ENCODE measurements at regions of chr11 and their contacts with region 1.

Region 1: DNA sequence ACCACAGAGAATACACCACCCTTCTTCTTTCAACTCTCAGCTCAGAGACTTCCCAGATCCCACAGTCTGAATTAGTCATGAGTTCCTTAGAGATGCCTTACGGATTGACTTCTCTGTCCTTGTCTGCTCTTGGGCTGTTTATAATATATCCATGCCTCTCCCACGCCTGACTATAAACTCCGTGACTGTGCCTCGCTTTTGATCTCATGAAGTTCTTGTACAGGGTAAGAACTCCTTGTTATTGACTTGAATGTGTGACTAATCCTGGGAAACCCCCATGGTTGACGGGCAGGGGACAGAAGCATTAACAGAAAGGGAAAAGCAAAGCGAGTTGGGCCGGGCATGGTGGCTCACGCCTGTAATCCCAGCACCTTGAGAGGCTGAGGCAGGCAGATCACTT is 62.4 kb upstream of the POU2AF1 start:
- DNase-seq: peak; percentile 44
- ATAC-seq: no peak
- H3K4me3 Mint-ChIP-seq: no peak overlapping the region
- H3K27ac Mint-ChIP-seq: no peak overlapping the region
- H3K4me1 Mint-ChIP-seq: peaks cover 16% of the 10 kb centered on the region
- H3K27me3 Mint-ChIP-seq: no peaks in the 10 kb centered on the region
- CTCF ChIP-seq: no peak

Region 2: GRCh38 chr11:111283945-111284481 is 157.4 kb before region 1 on chr11:
- CTCF ChIA-PET with region 1: interaction called, 56 read pairs
- POLR2A ChIA-PET with region 1: no interaction called
- intact Hi-C with region 1: loop called (anchors 2 kb)
- DNase-seq: no peak
- ATAC-seq: no peak
- H3K4me3 Mint-ChIP-seq: no peak overlapping the region
- H3K27ac Mint-ChIP-seq: no peak overlapping the region
- H3K4me1 Mint-ChIP-seq: no peaks in the 10 kb centered on the region
- H3K27me3 Mint-ChIP-seq: no peaks in the 10 kb centered on the region
- CTCF ChIP-seq: no peak